Caco-2 (cell line): ENCODE measurements at regions of chr2 and their contacts with region 1.

Region 1: GRCh38 chr2:112645310-112646101 is at the start of gene SLC20A1:
- DNase-seq: peak; percentile 96 to 100
- H3K4me3 ChIP-seq: peak within 1 kb of the TSS; percentile 93
- H3K4me3 Mint-ChIP-seq: peak within 1 kb of the TSS; percentile 83
- H3K27ac Mint-ChIP-seq: peak within 1 kb of the TSS; percentile 96
- H3K4me1 ChIP-seq: peaks cover 31% of the 10 kb centered on the region
- H3K4me1 Mint-ChIP-seq: peaks cover 39% of the 10 kb centered on the region
- H3K27me3 ChIP-seq: no peaks in the 10 kb centered on the region
- H3K27me3 Mint-ChIP-seq: no peaks in the 10 kb centered on the region
- CTCF ChIP-seq: peak; percentile 32 to 80
- total RNA-seq, gene SLC20A1: 91.1 and 102 TPM in 2 replicates

Region 2: DNA sequence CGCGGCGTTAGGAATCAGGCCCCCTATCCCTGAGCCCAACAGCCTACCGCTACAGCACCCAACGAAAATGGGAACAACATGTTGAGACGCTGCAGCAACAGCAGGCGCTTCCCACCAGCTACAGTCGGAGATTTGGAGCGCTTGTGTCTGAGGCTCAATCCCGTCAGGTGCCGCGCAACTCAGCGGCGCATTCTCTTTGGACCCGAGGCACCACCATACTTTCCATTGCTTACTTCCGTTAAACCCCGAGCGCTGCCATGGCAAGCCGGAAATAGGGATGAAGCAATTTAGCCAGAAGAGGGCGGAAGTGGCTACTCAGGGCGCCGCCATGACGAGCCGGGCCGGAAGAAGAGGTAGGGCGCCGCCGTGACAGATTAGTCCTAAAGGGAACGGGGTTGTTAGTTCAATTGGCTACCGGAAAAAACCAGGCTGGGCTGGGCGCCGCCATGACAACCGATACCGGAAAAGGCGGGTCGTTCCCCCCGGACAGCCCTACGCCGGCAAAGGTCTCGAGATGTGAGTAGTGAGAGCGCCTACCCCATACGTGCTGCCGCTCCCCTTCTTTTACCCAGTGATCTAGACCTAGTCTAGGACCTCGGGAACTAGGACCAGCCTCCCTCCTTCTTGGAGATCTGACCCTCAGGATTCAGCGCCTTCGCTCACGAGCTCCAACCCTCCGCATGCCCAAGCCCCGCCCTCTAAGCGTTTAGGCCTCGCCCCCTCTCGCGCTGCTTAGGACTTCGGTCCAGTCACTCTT is 61.2 kb before region 1 on chr2 and contains the start of gene CHCHD5:
- CTCF ChIA-PET with region 1: interaction called, 3 read pairs
- POLR2A ChIA-PET with region 1: interaction called, 13 read pairs
- intact Hi-C with region 1: loop called (anchors 1 kb)
- DNase-seq: peak; percentile 95 to 96
- H3K4me3 ChIP-seq: peak within 1 kb of the TSS; percentile 67
- H3K4me3 Mint-ChIP-seq: peak within 1 kb of the TSS; percentile 80
- H3K27ac Mint-ChIP-seq: peak within 1 kb of the TSS; percentile 97
- H3K4me1 ChIP-seq: peaks cover 13% of the 10 kb centered on the region
- H3K4me1 Mint-ChIP-seq: peaks cover 8% of the 10 kb centered on the region
- H3K27me3 ChIP-seq: no peaks in the 10 kb centered on the region
- H3K27me3 Mint-ChIP-seq: no peaks in the 10 kb centered on the region
- CTCF ChIP-seq: no peak
- total RNA-seq, gene CHCHD5: 50.7 and 56.0 TPM in 2 replicates

Region 3: GRCh38 chr2:112591378-112591777 is 54.1 kb before region 1 on chr2:
- CTCF ChIA-PET with region 1: interaction called, 5 read pairs
- POLR2A ChIA-PET with region 1: interaction called, 20 read pairs
- intact Hi-C with region 1: no loop called
- DNase-seq: peak; percentile 91 to 96
- H3K4me3 ChIP-seq: no peak overlapping the region
- H3K4me3 Mint-ChIP-seq: peak overlapping the region; percentile 49
- H3K27ac Mint-ChIP-seq: peak overlapping the region; percentile 78
- H3K4me1 ChIP-seq: peaks cover 28% of the 10 kb centered on the region
- H3K4me1 Mint-ChIP-seq: peaks cover 37% of the 10 kb centered on the region
- H3K27me3 ChIP-seq: no peaks in the 10 kb centered on the region
- H3K27me3 Mint-ChIP-seq: no peaks in the 10 kb centered on the region
- CTCF ChIP-seq: no peak

Region 4: GRCh38 chr2:112601751-112602150 is 43.8 kb before region 1 on chr2:
- CTCF ChIA-PET with region 1: interaction called, 3 read pairs
- POLR2A ChIA-PET with region 1: no interaction called
- intact Hi-C with region 1: loop called (anchors 1 kb)
- DNase-seq: peak in 1 of 2 experiments; percentile 12
- H3K4me3 ChIP-seq: no peak overlapping the region
- H3K4me3 Mint-ChIP-seq: no peak overlapping the region
- H3K27ac Mint-ChIP-seq: no peak overlapping the region
- H3K4me1 ChIP-seq: peaks cover 7% of the 10 kb centered on the region
- H3K4me1 Mint-ChIP-seq: peaks cover 14% of the 10 kb centered on the region
- H3K27me3 ChIP-seq: no peaks in the 10 kb centered on the region
- H3K27me3 Mint-ChIP-seq: no peaks in the 10 kb centered on the region
- CTCF ChIP-seq: no peak

Region 5: DNA sequence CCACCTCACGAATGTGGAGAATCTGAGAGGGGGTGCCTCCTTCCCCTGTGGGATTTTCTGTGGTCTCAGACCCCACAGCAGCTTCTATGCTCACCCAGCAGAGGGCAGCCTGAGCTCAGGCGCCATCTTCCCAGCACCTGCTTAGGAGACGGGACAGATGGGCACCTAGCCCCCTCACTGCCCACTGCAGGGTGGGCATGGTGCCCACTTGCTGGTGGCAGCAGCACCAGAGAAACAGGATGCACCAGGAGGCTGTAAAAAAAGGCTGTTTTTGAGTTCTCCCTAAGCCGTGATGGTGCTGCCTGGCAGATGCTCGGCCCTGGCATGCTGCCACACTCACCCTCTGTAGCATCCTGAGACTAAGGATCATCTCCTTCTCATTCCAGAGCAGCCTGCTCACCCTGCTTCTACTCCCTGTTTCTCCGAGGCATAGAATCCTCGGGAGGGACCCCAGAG is 18.9 kb before region 1 on chr2:
- CTCF ChIA-PET with region 1: interaction called, 14 read pairs
- POLR2A ChIA-PET with region 1: interaction called, 3 read pairs
- intact Hi-C with region 1: loop called (anchors 1 kb)
- DNase-seq: peak; percentile 65 to 67
- H3K4me3 ChIP-seq: no peak overlapping the region
- H3K4me3 Mint-ChIP-seq: no peak overlapping the region
- H3K27ac Mint-ChIP-seq: no peak overlapping the region
- H3K4me1 ChIP-seq: peaks cover 15% of the 10 kb centered on the region
- H3K4me1 Mint-ChIP-seq: peaks cover 8% of the 10 kb centered on the region
- H3K27me3 ChIP-seq: no peaks in the 10 kb centered on the region
- H3K27me3 Mint-ChIP-seq: no peaks in the 10 kb centered on the region
- CTCF ChIP-seq: peak; percentile 66 to 92

Region 6: DNA sequence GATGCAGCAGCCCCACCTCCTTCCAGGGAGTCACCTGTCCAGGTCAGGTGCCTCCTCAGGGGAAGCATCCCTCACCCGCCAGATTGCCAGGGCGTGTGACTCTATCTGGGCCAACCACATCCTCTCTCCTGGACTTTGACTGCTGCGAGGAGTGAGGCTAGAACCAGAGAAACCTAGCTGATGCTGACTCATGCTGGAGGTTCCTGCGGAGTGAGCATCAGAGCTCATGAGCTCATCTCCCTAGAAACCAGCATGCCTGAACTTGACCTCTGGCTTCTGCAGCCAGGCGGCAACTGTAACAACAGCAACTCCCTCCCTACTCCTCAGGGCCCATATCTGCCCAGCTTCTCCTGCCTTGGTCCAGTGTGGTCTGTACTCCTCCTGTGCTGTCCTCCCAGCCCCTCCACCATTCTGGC is 47.0 kb after region 1 on chr2:
- CTCF ChIA-PET with region 1: interaction called, 9 read pairs
- POLR2A ChIA-PET with region 1: interaction called, 8 read pairs
- intact Hi-C with region 1: loop called (anchors 5 kb)
- DNase-seq: peak; percentile 72 to 86
- H3K4me3 ChIP-seq: no peak overlapping the region
- H3K4me3 Mint-ChIP-seq: no peak overlapping the region
- H3K27ac Mint-ChIP-seq: peak overlapping the region; percentile 17
- H3K4me1 ChIP-seq: peaks cover 10% of the 10 kb centered on the region
- H3K4me1 Mint-ChIP-seq: peaks cover 16% of the 10 kb centered on the region
- H3K27me3 ChIP-seq: no peaks in the 10 kb centered on the region
- H3K27me3 Mint-ChIP-seq: no peaks in the 10 kb centered on the region
- CTCF ChIP-seq: no peak